Aorta (tissue), 5 donors: ENCODE measurements at regions of chr16 and their contacts with region 1.

Region 1: DNA sequence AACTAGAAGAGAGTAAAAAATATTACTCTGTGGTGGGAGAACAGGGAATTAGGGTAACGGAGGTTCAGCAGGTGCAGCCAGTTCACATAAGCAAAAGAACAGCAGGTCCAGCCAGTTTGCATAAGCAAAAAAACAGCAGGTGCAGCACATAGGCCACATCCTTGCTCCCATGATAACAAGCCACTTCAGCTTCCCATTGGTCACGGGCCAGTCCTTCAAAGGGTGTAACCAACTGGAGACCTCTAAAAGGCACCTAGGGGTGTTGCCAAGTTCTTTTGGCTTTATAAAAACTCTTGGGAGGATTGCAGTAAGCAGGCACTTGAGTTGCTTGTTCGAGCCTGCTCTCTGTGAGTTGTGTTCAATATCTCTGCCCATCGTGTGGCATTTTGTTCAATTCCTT is 488.1 kb downstream of the XYLT1 start:
- DNase-seq: no peak
- ATAC-seq: no peak
- H3K4me3 ChIP-seq: no peak overlapping the region
- H3K27ac ChIP-seq: no peak overlapping the region
- H3K4me1 ChIP-seq: no peaks in the 10 kb centered on the region
- H3K27me3 ChIP-seq: no peaks in the 10 kb centered on the region

Region 2: GRCh38 chr16:17026600-17027242 is 44.1 kb after region 1 on chr16:
- intact Hi-C with region 1: loop called in 1 of 2 experiments (anchors 5 kb)
- DNase-seq: no peak
- ATAC-seq: no peak
- H3K4me3 ChIP-seq: no peak overlapping the region
- H3K27ac ChIP-seq: no peak overlapping the region
- H3K4me1 ChIP-seq: no peaks in the 10 kb centered on the region
- H3K27me3 ChIP-seq: no peaks in the 10 kb centered on the region

Region 3: DNA sequence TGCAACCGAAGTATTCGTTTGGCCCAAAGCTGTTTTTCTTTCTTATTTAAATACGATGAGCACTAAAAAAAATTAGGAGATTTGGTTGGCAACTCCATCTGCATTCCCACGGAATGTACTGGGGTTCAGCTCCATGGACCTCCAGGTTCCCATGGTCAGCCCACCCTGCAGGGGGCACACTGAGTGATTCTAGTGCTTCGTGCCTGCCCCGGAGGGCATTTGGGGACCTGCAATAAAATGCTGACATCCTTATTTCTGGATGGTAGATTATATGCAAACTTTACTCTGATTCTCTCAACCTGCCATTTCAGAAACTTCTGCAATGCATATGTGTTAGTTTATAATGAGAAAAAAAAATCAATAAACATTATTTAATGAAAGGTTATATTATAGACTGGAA is 148.7 kb after region 1 on chr16:
- intact Hi-C with region 1: no loop called
- DNase-seq: no peak
- ATAC-seq: no peak
- H3K4me3 ChIP-seq: no peak overlapping the region
- H3K27ac ChIP-seq: no peak overlapping the region
- H3K4me1 ChIP-seq: no peaks in the 10 kb centered on the region
- H3K27me3 ChIP-seq: no peaks in the 10 kb centered on the region